Breast epithelium (tissue), 4 donors: ENCODE measurements at regions of chr7 and their contacts with region 1.

Region 1: GRCh38 chr7:112162142-112163020 is 43.8 kb downstream of the DOCK4 start:
- DNase-seq: no peak
- H3K4me3 ChIP-seq: no peak overlapping the region
- H3K27ac ChIP-seq: peak overlapping the region; percentile 21 to 22
- H3K4me1 ChIP-seq: peaks cover 0 to 4% of the 10 kb centered on the region in 2 donors
- H3K27me3 ChIP-seq: no peaks in the 10 kb centered on the region
- CTCF ChIP-seq: no peak
- POLR2A ChIP-seq: no peak

Region 2: DNA sequence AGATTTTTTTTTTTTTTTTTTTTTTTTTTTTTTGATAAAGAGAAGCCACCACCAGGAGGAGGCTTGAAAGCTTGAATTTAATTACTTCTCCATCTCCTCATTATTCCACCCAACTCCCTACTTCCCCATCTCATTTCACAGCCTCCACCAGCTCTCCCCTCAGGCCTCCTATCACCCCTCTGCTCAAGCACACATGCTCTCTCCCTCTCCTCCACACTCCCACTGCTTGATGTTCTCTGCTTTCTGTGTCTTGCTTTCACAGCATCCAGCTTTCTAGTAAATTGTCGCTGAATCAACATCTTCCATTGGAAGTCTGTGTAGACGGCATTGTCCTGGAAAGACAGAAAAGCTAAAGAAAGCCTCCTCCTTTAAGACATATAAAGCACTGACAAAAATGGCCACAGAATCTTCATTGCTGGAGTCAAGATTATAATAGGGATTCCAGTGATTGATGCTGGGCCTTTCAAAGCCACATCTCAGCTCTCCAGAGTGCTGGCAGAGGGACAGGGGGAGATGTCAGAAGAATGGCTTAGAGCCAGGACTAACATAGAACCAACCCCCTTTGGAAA is 14.5 kb before region 1 on chr7:
- intact Hi-C with region 1: loop called (anchors 1 kb)
- DNase-seq: no peak
- H3K4me3 ChIP-seq: no peak overlapping the region
- H3K27ac ChIP-seq: no peak overlapping the region
- H3K4me1 ChIP-seq: no peaks in the 10 kb centered on the region
- H3K27me3 ChIP-seq: no peaks in the 10 kb centered on the region
- CTCF ChIP-seq: no peak
- POLR2A ChIP-seq: no peak

Region 3: GRCh38 chr7:112806156-112806555 is 643.8 kb after region 1 on chr7:
- intact Hi-C with region 1: no loop called
- DNase-seq: no peak
- H3K4me3 ChIP-seq: no peak overlapping the region
- H3K27ac ChIP-seq: no peak overlapping the region
- H3K4me1 ChIP-seq: no peaks in the 10 kb centered on the region
- H3K27me3 ChIP-seq: no peaks in the 10 kb centered on the region
- CTCF ChIP-seq: no peak
- POLR2A ChIP-seq: no peak